Aorta (tissue), 5 donors: ENCODE measurements at regions of chr22 and their contacts with region 1.

Region 1: GRCh38 chr22:23849009-23850006 is 8.4 kb upstream of the SLC2A11 start:
- DNase-seq: peak; percentile 86 to 96
- ATAC-seq: peak; percentile 94
- H3K4me3 ChIP-seq: no peak overlapping the region
- H3K27ac ChIP-seq: no peak overlapping the region
- H3K4me1 ChIP-seq: no peaks in the 10 kb centered on the region
- H3K27me3 ChIP-seq: no peaks in the 10 kb centered on the region

Region 2: DNA sequence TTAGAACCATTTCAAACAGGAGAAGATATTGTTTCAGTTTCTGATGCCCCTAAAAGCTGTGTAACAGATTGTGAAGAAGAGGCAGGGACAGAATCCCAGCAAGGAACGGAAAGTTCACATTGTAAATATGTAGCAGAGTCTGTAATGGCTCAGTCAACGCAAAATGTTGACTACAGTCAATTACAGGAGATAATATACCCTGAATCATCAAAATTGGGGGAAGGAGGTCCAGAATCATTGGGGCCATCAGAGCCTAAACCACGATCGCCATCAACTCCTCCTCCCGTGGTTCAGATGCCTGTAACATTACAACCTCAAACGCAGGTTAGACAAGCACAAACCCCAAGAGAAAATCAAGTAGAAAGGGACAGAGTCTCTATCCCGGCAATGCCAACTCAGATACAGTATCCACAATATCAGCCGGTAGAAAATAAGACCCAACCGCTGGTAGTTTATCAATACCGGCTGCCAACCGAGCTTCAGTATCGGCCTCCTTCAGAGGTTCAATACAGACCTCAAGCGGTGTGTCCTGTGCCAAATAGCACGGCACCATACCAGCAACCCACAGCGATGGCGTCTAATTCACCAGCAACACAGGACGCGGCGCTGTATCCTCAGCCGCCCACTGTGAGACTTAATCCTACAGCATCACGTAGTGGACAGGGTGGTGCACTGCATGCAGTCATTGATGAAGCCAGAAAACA is 310.0 kb before region 1 on chr22:
- intact Hi-C with region 1: loop called (anchors 5 kb)
- DNase-seq: peak; percentile 82 to 88
- ATAC-seq: peak; percentile 97
- H3K4me3 ChIP-seq: no peak overlapping the region
- H3K27ac ChIP-seq: no peak overlapping the region
- H3K4me1 ChIP-seq: no peaks in the 10 kb centered on the region
- H3K27me3 ChIP-seq: no peaks in the 10 kb centered on the region

Region 3: DNA sequence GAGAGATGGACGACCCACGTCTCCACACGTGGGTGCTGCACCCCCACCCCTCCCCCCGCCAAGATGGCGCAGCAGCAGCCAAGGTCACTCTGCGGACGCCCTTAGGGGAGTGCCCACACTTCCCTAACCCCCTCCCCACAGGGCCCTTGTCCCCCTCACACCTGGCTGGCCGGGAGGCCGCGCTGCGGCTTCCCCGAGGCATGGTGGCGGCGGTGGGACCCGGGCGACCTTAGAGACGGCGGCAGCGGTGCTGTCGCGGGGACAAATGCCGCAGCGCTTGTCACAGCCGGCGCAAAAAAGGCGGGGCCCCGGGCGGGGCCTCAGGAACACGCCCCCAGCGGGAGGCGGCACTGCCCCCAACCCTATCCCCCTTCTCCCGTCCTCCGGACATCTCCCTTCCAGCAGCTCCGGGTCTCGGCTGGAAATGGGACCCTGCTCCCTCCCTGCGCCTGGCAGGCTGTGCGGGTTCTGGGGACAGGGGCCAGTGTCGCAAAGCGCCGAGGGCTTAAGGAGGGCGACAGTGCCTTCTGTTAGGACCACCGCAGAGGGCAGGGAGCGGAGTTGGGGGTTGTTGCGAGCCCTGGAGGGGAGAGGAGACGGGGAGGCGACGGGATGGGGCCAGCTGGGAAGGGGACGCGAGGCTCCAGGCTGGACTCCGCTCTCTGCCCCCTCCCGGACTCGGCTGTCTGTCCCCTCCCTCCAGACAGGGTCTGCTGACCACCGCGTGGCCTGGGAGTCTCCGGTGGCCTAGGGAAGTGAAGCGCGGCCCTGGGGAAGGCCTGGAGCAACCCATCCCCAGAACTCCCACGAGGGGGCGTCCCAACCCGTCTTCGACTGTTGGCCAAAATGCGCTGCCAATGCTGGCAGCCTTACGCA is 81.4 kb before region 1 on chr22 and contains the start of gene CHCHD10:
- intact Hi-C with region 1: loop called (anchors 2 to 5 kb)
- DNase-seq: peak; percentile 92 to 95
- ATAC-seq: peak; percentile 88
- H3K4me3 ChIP-seq: peak within 1 kb of the TSS; percentile 32 to 71
- H3K27ac ChIP-seq: peak within 1 kb of the TSS in 1 of 2 donors; percentile 2
- H3K4me1 ChIP-seq: no peaks in the 10 kb centered on the region
- H3K27me3 ChIP-seq: no peaks in the 10 kb centered on the region
- total RNA-seq, gene CHCHD10: 30.9 to 41.9 TPM

Region 4: GRCh38 chr22:23803001-23803819 is 46.1 kb before region 1 on chr22:
- intact Hi-C with region 1: no loop called
- DNase-seq: peak in 1 of 2 donors; percentile 17
- ATAC-seq: no peak
- H3K4me3 ChIP-seq: no peak overlapping the region
- H3K27ac ChIP-seq: no peak overlapping the region
- H3K4me1 ChIP-seq: no peaks in the 10 kb centered on the region
- H3K27me3 ChIP-seq: no peaks in the 10 kb centered on the region